ENCODE measurements at regions of chr3 and their contacts with region 1.

Region 1: DNA sequence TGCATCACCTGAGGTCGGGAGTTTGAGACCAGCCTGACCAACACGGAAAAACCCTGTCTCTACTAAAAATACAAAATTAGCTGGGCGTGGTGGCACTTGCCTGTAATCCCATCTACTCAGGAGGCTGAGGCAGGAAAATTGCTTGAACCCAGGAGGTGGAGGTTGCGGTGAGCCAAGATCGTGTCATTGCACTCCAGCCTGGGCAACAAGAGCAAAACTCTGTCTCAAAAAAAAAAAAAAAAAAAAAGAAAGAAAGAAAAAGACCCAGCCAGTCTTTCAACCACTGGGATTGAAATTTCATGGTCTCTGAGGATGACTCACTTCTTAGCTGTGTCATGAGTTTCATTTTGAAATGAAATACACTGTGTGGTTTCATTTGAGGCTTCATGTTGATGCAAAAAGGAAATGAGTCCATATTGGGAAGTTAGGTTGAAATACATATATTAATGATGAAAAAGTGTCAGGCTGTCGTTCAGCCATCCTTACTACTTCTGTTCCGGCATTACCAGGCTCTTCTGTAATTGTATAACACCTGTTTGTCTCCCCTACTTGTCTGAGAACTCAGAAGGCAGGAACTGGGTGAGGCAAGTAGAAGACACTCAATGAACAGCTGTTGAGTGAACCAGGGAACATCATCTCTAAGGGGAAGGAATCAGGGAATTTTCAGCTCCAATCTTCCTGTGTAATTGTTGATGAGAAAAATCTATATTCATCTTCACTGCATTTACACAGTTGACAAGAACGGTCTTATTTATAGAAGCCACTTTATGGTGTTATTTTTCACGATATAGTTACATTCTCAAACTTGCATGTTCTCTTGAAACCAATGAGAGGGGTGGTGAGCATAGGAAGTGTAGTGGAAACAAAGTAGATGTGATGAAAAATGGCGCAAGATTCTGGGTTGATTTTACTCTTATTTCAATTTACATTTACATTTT is 87.4 kb downstream of the NFKBIZ start:
- DNase-seq: peak; percentile 70
- H3K4me3 ChIP-seq: peak overlapping the region; percentile 34
- H3K27ac ChIP-seq: peak overlapping the region; percentile 61
- H3K4me1 ChIP-seq: peaks cover 72% of the 10 kb centered on the region
- CTCF ChIP-seq: no peak

Region 2: DNA sequence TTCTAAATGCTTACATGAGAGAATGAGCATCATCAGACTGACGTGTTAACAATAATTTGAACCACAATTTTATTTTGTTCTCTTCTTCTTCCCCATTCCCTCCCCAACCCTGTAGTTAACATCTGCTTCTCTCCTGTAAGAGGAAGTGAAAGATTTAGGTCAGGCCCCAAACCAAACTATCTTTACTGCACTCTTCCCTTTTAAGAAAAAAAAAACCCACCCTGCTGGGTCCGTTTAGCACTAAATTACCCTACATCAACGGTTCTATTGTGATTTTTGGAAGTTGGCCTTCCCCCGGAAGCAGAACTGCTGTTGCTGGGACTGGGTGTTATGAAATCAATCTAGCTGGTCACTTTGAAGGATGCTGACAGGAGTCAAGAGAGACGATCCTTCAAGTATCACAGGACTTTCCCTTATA is 37.9 kb before region 1 on chr3:
- CTCF ChIA-PET with region 1: interaction called, 4 read pairs
- POLR2A ChIA-PET with region 1: interaction called, 17 read pairs
- intact Hi-C with region 1: loop called (anchors 1 kb)
- DNase-seq: peak; percentile 91
- H3K4me3 ChIP-seq: peak overlapping the region; percentile 59
- H3K27ac ChIP-seq: peak overlapping the region; percentile 98
- H3K4me1 ChIP-seq: peaks cover 62% of the 10 kb centered on the region
- CTCF ChIP-seq: no peak

Region 3: GRCh38 chr3:101913173-101913572 is 23.5 kb before region 1 on chr3:
- CTCF ChIA-PET with region 1: interaction called, 3 read pairs
- POLR2A ChIA-PET with region 1: interaction called, 13 read pairs
- intact Hi-C with region 1: no loop called
- DNase-seq: no peak
- H3K4me3 ChIP-seq: no peak overlapping the region
- H3K27ac ChIP-seq: no peak overlapping the region
- H3K4me1 ChIP-seq: no peaks in the 10 kb centered on the region
- CTCF ChIP-seq: no peak

Region 4: DNA sequence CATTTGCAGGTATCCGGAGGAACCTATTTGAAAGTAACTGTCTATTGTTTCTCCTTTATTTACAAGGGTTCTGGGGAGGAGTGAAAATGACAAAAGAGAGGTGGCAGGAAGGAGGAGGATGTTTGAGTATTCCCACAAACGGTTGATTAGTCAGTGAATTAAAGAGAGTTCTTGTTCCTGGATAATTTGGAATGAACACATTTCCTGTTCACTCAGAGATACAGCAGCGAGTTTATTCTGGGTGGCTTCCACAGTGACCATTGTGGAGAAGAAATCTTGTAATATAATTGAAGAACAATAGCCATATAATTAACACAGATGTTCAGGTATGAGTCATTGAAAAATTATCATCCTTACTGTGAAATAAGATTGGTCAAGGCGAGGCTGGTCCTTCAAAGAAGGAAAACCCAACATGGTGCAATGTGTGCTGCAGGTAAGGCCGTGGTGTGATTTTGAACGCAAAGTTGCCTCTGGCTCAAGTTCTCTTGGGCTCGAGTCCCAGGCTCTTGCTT is 10.0 kb before region 1 on chr3:
- CTCF ChIA-PET with region 1: no interaction called
- POLR2A ChIA-PET with region 1: interaction called, 20 read pairs
- intact Hi-C with region 1: no loop called
- DNase-seq: no peak
- H3K4me3 ChIP-seq: no peak overlapping the region
- H3K27ac ChIP-seq: no peak overlapping the region
- H3K4me1 ChIP-seq: no peaks in the 10 kb centered on the region
- CTCF ChIP-seq: no peak

Region 5: GRCh38 chr3:101995371-101996046 is 58.8 kb after region 1 on chr3:
- CTCF ChIA-PET with region 1: no interaction called
- POLR2A ChIA-PET with region 1: interaction called, 3 read pairs
- intact Hi-C with region 1: loop called (anchors 10 kb)
- DNase-seq: no peak
- H3K4me3 ChIP-seq: no peak overlapping the region
- H3K27ac ChIP-seq: no peak overlapping the region
- H3K4me1 ChIP-seq: peaks cover 25% of the 10 kb centered on the region
- CTCF ChIP-seq: no peak

Measured in OCI-LY7 (cell line).